ENCODE measurements at regions of chr1 and their contacts with region 1.

Region 1: GRCh38 chr1:223771814-223772770 is 59.8 kb downstream of the CAPN2 start:
- DNase-seq: peak; percentile 92 to 98 (median 94)
- ATAC-seq: peak; percentile 91
- H3K4me3 ChIP-seq: no peak overlapping the region
- H3K27ac ChIP-seq: peak overlapping the region; percentile 93
- H3K4me1 ChIP-seq: peaks cover 27 to 62% of the 10 kb centered on the region in 2 experiments
- H3K27me3 ChIP-seq: no peaks in the 10 kb centered on the region
- CTCF ChIP-seq: no peak
- EP300 ChIP-seq: peak; percentile 91
- POLR2A ChIP-seq: peak; percentile 76
- RAD21 ChIP-seq: no peak; a peak in 3 of 4 replicates

Region 2: DNA sequence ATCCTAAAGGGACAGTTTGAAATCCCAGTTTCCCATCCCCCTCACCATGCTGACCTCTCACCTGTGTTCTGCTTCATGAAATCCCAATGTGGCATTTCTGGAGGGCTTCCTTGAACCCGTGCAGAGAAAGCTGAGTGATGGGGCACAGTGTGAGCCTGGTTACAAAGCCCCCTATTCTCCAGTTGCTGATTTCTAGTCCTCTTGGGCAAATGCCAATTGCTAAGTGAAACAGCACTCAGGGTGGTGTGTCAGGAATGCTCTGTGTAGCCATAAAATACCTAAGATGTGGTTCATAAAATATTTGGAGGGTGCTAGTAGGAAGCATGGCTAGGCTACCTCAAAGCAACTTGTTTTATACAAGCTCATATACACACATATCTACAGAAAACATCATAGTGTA is 440.2 kb before region 1 on chr1:
- CTCF ChIA-PET with region 1: no interaction called
- POLR2A ChIA-PET with region 1: no interaction called
- in situ Hi-C with region 1: no loop called
- intact Hi-C with region 1: no loop called
- DNase-seq: no peak
- ATAC-seq: no peak
- H3K4me3 ChIP-seq: no peak overlapping the region
- H3K27ac ChIP-seq: no peak overlapping the region
- H3K4me1 ChIP-seq: no peaks in the 10 kb centered on the region; a peak in 1 of 5 replicates
- H3K27me3 ChIP-seq: peaks cover 15 to 26% of the 10 kb centered on the region in 2 experiments
- CTCF ChIP-seq: no peak
- EP300 ChIP-seq: no peak
- POLR2A ChIP-seq: no peak
- RAD21 ChIP-seq: no peak

Region 3: GRCh38 chr1:223755992-223756775 is 15.9 kb before region 1 on chr1:
- CTCF ChIA-PET with region 1: no interaction called
- POLR2A ChIA-PET with region 1: interaction called, 75 read pairs
- in situ Hi-C with region 1: no loop called
- intact Hi-C with region 1: no loop called
- DNase-seq: no peak
- ATAC-seq: no peak; the same call in 2 of the 3 replicates
- H3K4me3 ChIP-seq: no peak overlapping the region
- H3K27ac ChIP-seq: no peak overlapping the region
- H3K4me1 ChIP-seq: no peaks in the 10 kb centered on the region; a peak in 2 of 5 replicates
- H3K27me3 ChIP-seq: no peaks in the 10 kb centered on the region
- CTCF ChIP-seq: 0 out of 6 replicates have a peak, but pooled peaks of 1 of the 3 experiments have one; percentile 2
- EP300 ChIP-seq: no peak
- POLR2A ChIP-seq: no peak
- RAD21 ChIP-seq: no peak

Region 4: GRCh38 chr1:223788746-223789415 is 16.8 kb after region 1 on chr1:
- CTCF ChIA-PET with region 1: no interaction called
- POLR2A ChIA-PET with region 1: interaction called, 58 read pairs
- in situ Hi-C with region 1: no loop called
- intact Hi-C with region 1: no loop called
- DNase-seq: peak; percentile 75 to 98 (median 84)
- ATAC-seq: peak; percentile 95
- H3K4me3 ChIP-seq: no peak overlapping the region
- H3K27ac ChIP-seq: peak overlapping the region; percentile 89
- H3K4me1 ChIP-seq: peaks cover 22 to 49% of the 10 kb centered on the region in 2 experiments
- H3K27me3 ChIP-seq: no peaks in the 10 kb centered on the region
- CTCF ChIP-seq: no peak
- EP300 ChIP-seq: peak; percentile 99
- POLR2A ChIP-seq: no peak; the same call in 1 of the 2 replicates
- RAD21 ChIP-seq: peak; percentile 20 to 43; a peak in 3 of 4 replicates

Region 5: DNA sequence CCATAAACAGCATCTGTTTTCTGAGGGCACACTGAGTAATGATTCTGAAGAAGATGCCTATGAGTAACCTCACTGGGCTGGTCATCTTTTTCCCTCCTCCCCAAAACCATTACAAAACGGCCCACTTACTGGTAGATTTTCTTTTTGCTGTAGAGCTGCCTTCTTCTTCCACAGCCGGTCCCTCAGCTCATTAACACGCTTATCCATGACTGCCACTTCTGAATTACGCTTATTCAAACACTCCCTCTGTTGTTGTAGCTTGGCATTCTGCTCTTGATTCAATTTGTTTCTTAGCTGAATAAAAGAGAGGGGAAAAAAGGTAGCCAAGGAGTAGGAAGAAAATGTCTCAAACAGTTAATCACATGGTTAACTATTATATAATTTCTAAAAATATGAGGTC is 30.5 kb after region 1 on chr1:
- CTCF ChIA-PET with region 1: no interaction called
- POLR2A ChIA-PET with region 1: interaction called, 11 read pairs
- in situ Hi-C with region 1: no loop called
- intact Hi-C with region 1: no loop called
- DNase-seq: no peak
- ATAC-seq: no peak
- H3K4me3 ChIP-seq: no peak overlapping the region
- H3K27ac ChIP-seq: no peak overlapping the region
- H3K4me1 ChIP-seq: no peaks in the 10 kb centered on the region
- H3K27me3 ChIP-seq: no peaks in the 10 kb centered on the region
- CTCF ChIP-seq: no peak
- EP300 ChIP-seq: no peak
- POLR2A ChIP-seq: no peak
- RAD21 ChIP-seq: no peak

Region 6: GRCh38 chr1:223840254-223840653 is 68.2 kb after region 1 on chr1:
- CTCF ChIA-PET with region 1: no interaction called
- POLR2A ChIA-PET with region 1: interaction called, 13 read pairs
- in situ Hi-C with region 1: no loop called
- intact Hi-C with region 1: no loop called
- DNase-seq: no peak
- ATAC-seq: peak; percentile 2; the same call in 2 of the 3 replicates
- H3K4me3 ChIP-seq: no peak overlapping the region
- H3K27ac ChIP-seq: peak overlapping the region; percentile 28; the same call in 1 of the 3 replicates
- H3K4me1 ChIP-seq: peaks cover 12 to 63% of the 10 kb centered on the region in 2 experiments
- H3K27me3 ChIP-seq: no peaks in the 10 kb centered on the region
- CTCF ChIP-seq: no peak
- EP300 ChIP-seq: no peak
- POLR2A ChIP-seq: no peak
- RAD21 ChIP-seq: no peak

Region 7: DNA sequence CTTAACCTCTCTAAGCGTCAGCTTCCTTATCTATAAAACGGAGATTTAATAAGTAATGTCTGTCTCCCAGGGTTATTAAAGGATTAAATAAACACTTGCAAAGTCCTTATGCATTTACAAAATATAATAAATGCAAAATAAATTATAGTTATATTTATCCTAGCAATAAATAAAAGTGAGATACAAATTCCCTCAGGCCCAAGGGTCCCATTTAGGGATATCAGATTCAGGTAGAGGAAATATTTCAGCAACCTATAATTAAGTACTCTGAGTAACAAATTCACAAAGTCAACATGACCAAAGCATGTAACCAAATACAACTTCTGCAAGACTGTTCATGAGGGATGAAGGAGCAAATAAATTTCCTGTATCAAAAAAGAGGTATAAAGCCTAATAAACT is 539.9 kb after region 1 on chr1:
- CTCF ChIA-PET with region 1: no interaction called
- POLR2A ChIA-PET with region 1: no interaction called
- in situ Hi-C with region 1: no loop called
- intact Hi-C with region 1: no loop called
- DNase-seq: no peak
- ATAC-seq: no peak
- H3K4me3 ChIP-seq: no peak overlapping the region
- H3K27ac ChIP-seq: no peak overlapping the region
- H3K4me1 ChIP-seq: no peaks in the 10 kb centered on the region
- H3K27me3 ChIP-seq: no peaks in the 10 kb centered on the region
- CTCF ChIP-seq: no peak
- EP300 ChIP-seq: no peak
- POLR2A ChIP-seq: no peak
- RAD21 ChIP-seq: no peak

Measured in K562 (cell line).